CD4-positive, alpha-beta memory T cell (primary cell): ENCODE measurements at regions of chr11 and their contacts with region 1.

Region 1: GRCh38 chr11:118956094-118956846 is at the start of gene UPK2:
- DNase-seq: peak; percentile 83 to 85 (median 83)
- H3K4me3 ChIP-seq: no peak within 1 kb of the TSS
- H3K4me3 Mint-ChIP-seq: no peak within 1 kb of the TSS
- H3K27ac ChIP-seq: no peak within 1 kb of the TSS
- H3K27ac Mint-ChIP-seq: peak within 1 kb of the TSS in 4 of 7 donors; percentile 42 to 55 (median 51)
- H3K4me1 ChIP-seq: peaks cover 5% of the 10 kb centered on the region
- H3K4me1 Mint-ChIP-seq: peaks cover 4 to 5% (median 4%) of the 10 kb centered on the region in 4 donors
- H3K27me3 ChIP-seq: no peaks in the 10 kb centered on the region
- H3K27me3 Mint-ChIP-seq: peaks cover under 1 to 4% of the 10 kb centered on the region in 2 donors
- total RNA-seq, gene UPK2: not detected

Region 2: GRCh38 chr11:118592616-118593367 is 363.5 kb before region 1 on chr11:
- CTCF ChIA-PET with region 1: interaction called, 5 read pairs
- POLR2A ChIA-PET with region 1: no interaction called
- intact Hi-C with region 1: loop called (anchors 5 kb)
- DNase-seq: no peak
- H3K4me3 ChIP-seq: no peak overlapping the region
- H3K4me3 Mint-ChIP-seq: no peak overlapping the region
- H3K27ac ChIP-seq: no peak overlapping the region
- H3K27ac Mint-ChIP-seq: peak overlapping the region in 2 of 7 donors; percentile 29 to 59
- H3K4me1 ChIP-seq: peaks cover 14% of the 10 kb centered on the region
- H3K4me1 Mint-ChIP-seq: peaks cover 11 to 15% (median 13%) of the 10 kb centered on the region in 4 donors
- H3K27me3 ChIP-seq: no peaks in the 10 kb centered on the region
- H3K27me3 Mint-ChIP-seq: no peaks in the 10 kb centered on the region

Region 3: DNA sequence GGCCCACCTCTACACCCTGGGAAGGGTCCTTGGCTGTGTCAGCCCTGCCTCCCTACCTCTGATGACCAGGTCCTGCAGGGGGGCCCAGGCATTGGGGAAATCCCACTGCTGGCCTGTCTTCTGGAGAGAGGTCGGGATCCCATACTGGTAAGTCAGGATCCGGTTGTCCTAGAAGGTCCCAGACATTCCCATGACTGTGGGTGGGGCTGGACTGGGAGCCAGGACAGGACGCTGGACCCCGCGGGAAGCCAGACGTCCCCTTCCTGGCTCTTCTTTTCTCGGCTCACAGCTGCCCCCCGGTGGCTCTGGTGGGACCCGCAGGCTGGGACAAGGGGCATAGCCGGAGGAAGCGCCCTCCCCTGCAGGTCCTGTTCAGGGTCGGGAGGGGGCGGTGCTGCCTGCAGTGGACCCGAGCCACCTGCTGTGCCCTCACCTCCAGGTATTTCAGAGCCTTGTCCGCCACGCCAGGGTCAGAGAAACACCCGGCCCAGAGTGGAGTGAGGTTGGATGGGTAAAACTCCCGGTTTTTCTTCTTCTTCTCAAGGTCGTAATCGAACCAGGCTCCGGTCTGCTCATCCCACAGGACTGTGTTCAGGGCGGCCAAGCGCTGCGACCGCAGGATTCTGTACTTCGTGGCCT is 296.8 kb before region 1 on chr11:
- CTCF ChIA-PET with region 1: interaction called, 10 read pairs
- POLR2A ChIA-PET with region 1: no interaction called
- intact Hi-C with region 1: no loop called
- DNase-seq: peak; percentile 80 to 87 (median 80)
- H3K4me3 ChIP-seq: no peak overlapping the region
- H3K4me3 Mint-ChIP-seq: peak overlapping the region in 1 of 8 donors; percentile 34
- H3K27ac ChIP-seq: no peak overlapping the region
- H3K27ac Mint-ChIP-seq: no peak overlapping the region
- H3K4me1 ChIP-seq: peaks cover 11% of the 10 kb centered on the region
- H3K4me1 Mint-ChIP-seq: peaks cover 0 to 5% (median 2%) of the 10 kb centered on the region in 4 donors
- H3K27me3 ChIP-seq: no peaks in the 10 kb centered on the region
- H3K27me3 Mint-ChIP-seq: no peaks in the 10 kb centered on the region

Region 4: GRCh38 chr11:118907051-118908042 is 48.9 kb before region 1 on chr11:
- CTCF ChIA-PET with region 1: interaction called, 23 read pairs
- POLR2A ChIA-PET with region 1: interaction called, 5 read pairs
- intact Hi-C with region 1: loop called (anchors 1 kb)
- DNase-seq: peak; percentile 80 to 86 (median 83)
- H3K4me3 ChIP-seq: no peak overlapping the region
- H3K4me3 Mint-ChIP-seq: peak overlapping the region in 6 of 8 donors; percentile 0 to 85 (median 54)
- H3K27ac ChIP-seq: peak overlapping the region; percentile 40
- H3K27ac Mint-ChIP-seq: peak overlapping the region; percentile 91 to 96 (median 95)
- H3K4me1 ChIP-seq: peaks cover 55% of the 10 kb centered on the region
- H3K4me1 Mint-ChIP-seq: peaks cover 32 to 51% (median 42%) of the 10 kb centered on the region in 4 donors
- H3K27me3 ChIP-seq: no peaks in the 10 kb centered on the region
- H3K27me3 Mint-ChIP-seq: no peaks in the 10 kb centered on the region

Region 5: DNA sequence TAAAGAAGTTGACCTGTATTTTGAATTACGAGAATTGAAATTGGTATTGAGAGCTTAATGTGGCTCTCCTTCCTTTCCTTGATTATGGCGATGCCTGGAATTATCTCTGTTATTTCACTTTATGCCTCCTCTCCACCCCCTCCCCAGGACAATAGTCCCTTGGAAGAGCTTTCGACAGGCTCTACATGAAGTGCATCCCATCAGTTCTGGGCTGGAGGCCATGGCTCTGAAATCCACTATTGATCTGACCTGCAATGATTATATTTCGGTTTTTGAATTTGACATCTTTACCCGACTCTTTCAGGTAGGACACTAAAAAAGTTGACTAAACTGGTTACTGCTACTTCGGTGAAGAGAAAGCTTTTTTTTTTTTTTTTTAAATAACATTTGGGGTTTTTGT is 317.5 kb after region 1 on chr11:
- CTCF ChIA-PET with region 1: no interaction called
- POLR2A ChIA-PET with region 1: no interaction called
- intact Hi-C with region 1: no loop called
- DNase-seq: no peak
- H3K4me3 ChIP-seq: no peak overlapping the region
- H3K4me3 Mint-ChIP-seq: no peak overlapping the region
- H3K27ac ChIP-seq: no peak overlapping the region
- H3K27ac Mint-ChIP-seq: peak overlapping the region in 1 of 7 donors; percentile 50
- H3K4me1 ChIP-seq: no peaks in the 10 kb centered on the region
- H3K4me1 Mint-ChIP-seq: peaks cover 0 to 8% (median 4%) of the 10 kb centered on the region in 4 donors
- H3K27me3 ChIP-seq: no peaks in the 10 kb centered on the region
- H3K27me3 Mint-ChIP-seq: no peaks in the 10 kb centered on the region